ENCODE measurements at regions of chr2 and their contacts with region 1.

Region 1: GRCh38 chr2:127007652-127008051 is 99.3 kb downstream of the BIN1 start:
- DNase-seq: no peak

Region 2: GRCh38 chr2:125710430-125710960 is 1297.2 kb before region 1 on chr2:
- intact Hi-C with region 1: loop called in 1 of 2 experiments (anchors 5 kb)
- DNase-seq: no peak

Region 3: DNA sequence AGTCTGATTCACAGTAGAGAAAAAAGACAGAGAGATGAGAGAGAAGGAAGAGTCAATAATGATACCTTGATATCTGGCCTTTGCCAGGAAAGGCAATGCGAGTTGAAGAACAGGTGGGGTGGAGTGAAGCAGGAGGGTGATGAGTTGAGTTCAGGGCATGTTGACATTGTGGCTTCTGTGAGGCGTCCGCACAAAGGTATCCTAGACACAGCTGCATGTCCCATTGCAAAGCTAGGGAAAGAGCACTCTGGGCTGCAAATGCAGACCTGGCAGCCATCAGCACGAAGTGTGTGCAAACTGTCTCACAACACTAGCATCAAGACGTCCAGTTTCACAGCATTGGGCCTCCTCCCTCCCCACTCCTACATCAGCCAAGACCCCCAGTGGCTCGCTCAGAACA is 72.9 kb before region 1 on chr2:
- intact Hi-C with region 1: loop called in 1 of 2 experiments (anchors 2 kb)
- DNase-seq: no peak

Measured in posterior vena cava (tissue), 2 donors.